H1 (cell line): ENCODE measurements at regions of chr2 and their contacts with region 1.

Region 1: GRCh38 chr2:176814306-176815052 is 398.1 kb upstream of the HNRNPA3 start:
- DNase-seq: no peak
- H3K4me3 ChIP-seq: no peak overlapping the region
- H3K27ac ChIP-seq: no peak overlapping the region
- H3K4me1 ChIP-seq: peaks cover 5 to 20% (median 15%) of the 10 kb centered on the region in 4 experiments; a peak in 5 of 7 replicates
- H3K27me3 ChIP-seq: no peaks in the 10 kb centered on the region; a peak in 1 of 7 replicates
- CTCF ChIP-seq: peak in 2 of 3 experiments; percentile 29 to 47; a peak in 2 of 4 replicates
- EP300 ChIP-seq: no peak
- POLR2A ChIP-seq: no peak
- RAD21 ChIP-seq: peak; percentile 76 to 79

Region 2: DNA sequence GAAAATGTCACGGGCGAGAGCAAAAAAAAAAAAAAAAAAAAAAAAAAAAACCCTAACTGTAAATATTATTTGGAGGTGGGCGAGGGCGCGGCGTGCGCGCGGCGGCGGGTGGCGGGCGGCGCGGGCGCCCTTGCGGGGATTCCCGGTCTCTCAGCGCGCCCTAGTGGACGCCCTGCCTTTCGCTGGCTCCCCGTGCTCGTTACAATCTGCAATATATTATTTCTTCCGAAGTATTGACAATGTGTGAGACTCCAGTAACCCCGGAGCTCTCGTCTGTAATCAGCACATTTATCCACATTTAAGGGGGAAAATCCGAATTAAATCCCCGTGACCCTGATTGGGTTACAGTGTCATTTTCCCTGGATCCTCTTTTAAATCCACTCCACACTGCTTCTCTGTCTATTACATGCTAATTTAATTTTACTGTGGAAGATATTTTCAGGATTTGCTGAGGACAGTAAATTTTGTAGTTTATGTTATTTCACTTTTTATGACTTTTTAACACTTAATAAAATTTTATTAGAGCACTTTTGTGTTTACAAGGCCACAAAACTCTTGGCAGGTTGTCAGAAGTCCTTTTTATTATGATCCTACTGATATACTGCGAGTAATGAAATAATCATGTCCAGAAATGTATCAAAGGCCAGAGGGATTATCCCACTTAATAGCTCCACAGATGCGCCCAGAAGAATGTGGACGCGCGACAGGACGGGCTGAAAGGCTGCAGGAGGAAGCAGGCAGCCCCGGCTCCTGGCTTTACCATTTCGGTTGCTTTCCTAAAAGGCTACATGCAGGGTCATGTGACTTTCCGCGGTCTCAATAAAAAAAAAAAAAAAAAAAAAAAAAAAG is 176.1 kb before region 1 on chr2:
- CTCF ChIA-PET with region 1: interaction called, 11 read pairs
- POLR2A ChIA-PET with region 1: no interaction called
- DNase-seq: peak in 1 of 2 experiments; percentile 79
- H3K4me3 ChIP-seq: peak overlapping the region; percentile 34 to 68 (median 45)
- H3K27ac ChIP-seq: no peak overlapping the region
- H3K4me1 ChIP-seq: peaks cover 0 to 5% (median 0%) of the 10 kb centered on the region in 4 experiments; a peak in 2 of 7 replicates
- H3K27me3 ChIP-seq: peaks cover 12 to 35% (median 20%) of the 10 kb centered on the region in 4 experiments
- CTCF ChIP-seq: peak; percentile 56 to 79 (median 78)
- EP300 ChIP-seq: no peak
- POLR2A ChIP-seq: no peak
- RAD21 ChIP-seq: peak; percentile 81 to 88

Region 3: DNA sequence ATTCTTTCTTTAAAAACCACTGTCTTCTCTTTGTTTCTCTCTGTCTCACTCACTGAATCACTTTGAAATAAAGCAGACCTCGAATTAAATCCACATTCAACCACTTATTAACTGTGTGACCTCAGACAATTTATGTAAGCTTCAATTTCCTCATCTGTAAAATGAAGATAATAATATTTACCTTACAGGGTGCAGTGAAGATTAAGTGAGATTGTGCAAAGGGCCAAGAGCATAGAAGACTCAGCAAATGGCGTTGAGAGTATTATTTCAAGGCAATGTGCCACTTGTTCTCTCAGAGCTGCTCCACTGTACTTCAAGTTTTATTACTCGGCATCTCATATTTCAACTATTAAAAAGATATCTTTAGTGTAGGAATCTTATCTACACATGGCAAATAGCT is 56.1 kb before region 1 on chr2:
- CTCF ChIA-PET with region 1: interaction called, 14 read pairs
- POLR2A ChIA-PET with region 1: no interaction called
- DNase-seq: no peak
- H3K4me3 ChIP-seq: no peak overlapping the region
- H3K27ac ChIP-seq: no peak overlapping the region
- H3K4me1 ChIP-seq: peaks cover 0 to 12% (median 3%) of the 10 kb centered on the region in 4 experiments; a peak in 4 of 7 replicates
- H3K27me3 ChIP-seq: no peaks in the 10 kb centered on the region
- CTCF ChIP-seq: no peak
- EP300 ChIP-seq: no peak
- POLR2A ChIP-seq: no peak
- RAD21 ChIP-seq: no peak

Region 4: GRCh38 chr2:176804392-176804791 is 10.1 kb before region 1 on chr2:
- CTCF ChIA-PET with region 1: interaction called, 19 read pairs
- POLR2A ChIA-PET with region 1: no interaction called
- DNase-seq: no peak
- H3K4me3 ChIP-seq: no peak overlapping the region
- H3K27ac ChIP-seq: no peak overlapping the region
- H3K4me1 ChIP-seq: no peaks in the 10 kb centered on the region
- H3K27me3 ChIP-seq: no peaks in the 10 kb centered on the region
- CTCF ChIP-seq: no peak
- EP300 ChIP-seq: no peak
- POLR2A ChIP-seq: no peak
- RAD21 ChIP-seq: no peak

Region 5: GRCh38 chr2:176830362-176830761 is 15.9 kb after region 1 on chr2:
- CTCF ChIA-PET with region 1: interaction called, 29 read pairs
- POLR2A ChIA-PET with region 1: no interaction called
- DNase-seq: no peak
- H3K4me3 ChIP-seq: no peak overlapping the region
- H3K27ac ChIP-seq: no peak overlapping the region
- H3K4me1 ChIP-seq: no peaks in the 10 kb centered on the region
- H3K27me3 ChIP-seq: no peaks in the 10 kb centered on the region
- CTCF ChIP-seq: peak; percentile 38 to 53 (median 40)
- EP300 ChIP-seq: no peak
- POLR2A ChIP-seq: no peak
- RAD21 ChIP-seq: peak; percentile 34 to 54

Region 6: DNA sequence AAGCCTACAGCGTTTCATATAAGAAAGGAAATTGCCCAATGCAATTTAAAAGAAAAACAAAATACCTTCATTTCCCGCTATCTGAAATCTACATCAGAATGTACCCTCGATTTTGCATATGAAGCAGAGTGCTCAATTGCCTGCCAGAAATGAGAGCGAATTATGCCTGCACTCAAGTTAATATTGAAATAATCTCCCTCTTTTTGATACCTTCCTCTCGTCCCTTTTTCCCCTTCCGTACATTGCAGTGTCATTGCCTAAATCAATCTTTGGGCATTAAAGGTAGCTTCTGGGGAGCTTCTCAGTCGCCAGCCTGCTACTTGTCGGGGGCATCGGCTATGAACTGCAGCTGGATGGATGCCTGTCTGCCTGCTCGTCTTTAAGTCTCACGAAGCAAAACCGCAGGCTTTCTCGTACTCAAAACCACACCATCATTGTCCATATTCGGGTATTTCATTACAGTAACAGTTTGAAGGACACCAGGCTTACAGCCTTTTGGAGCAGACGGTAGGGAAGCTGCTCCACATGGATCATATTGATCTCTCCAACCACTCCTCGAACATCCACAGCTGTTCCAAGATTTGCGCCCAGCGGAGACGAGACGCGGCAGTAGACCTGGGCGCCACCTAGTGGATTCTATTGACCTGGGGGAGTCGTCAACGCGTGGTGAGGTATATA is 334.1 kb after region 1 on chr2:
- CTCF ChIA-PET with region 1: interaction called, 18 read pairs
- POLR2A ChIA-PET with region 1: no interaction called
- DNase-seq: peak; percentile 59 to 93
- H3K4me3 ChIP-seq: peak overlapping the region; percentile 14 to 60 (median 59); a peak in 7 of 8 replicates
- H3K27ac ChIP-seq: no peak overlapping the region
- H3K4me1 ChIP-seq: no peaks in the 10 kb centered on the region; a peak in 2 of 7 replicates
- H3K27me3 ChIP-seq: peaks cover 0 to 7% (median 1%) of the 10 kb centered on the region in 4 experiments; a peak in 3 of 7 replicates
- CTCF ChIP-seq: peak; percentile 89 to 90 (median 90)
- EP300 ChIP-seq: no peak
- POLR2A ChIP-seq: no peak
- RAD21 ChIP-seq: peak; percentile 73 to 82

Region 7: DNA sequence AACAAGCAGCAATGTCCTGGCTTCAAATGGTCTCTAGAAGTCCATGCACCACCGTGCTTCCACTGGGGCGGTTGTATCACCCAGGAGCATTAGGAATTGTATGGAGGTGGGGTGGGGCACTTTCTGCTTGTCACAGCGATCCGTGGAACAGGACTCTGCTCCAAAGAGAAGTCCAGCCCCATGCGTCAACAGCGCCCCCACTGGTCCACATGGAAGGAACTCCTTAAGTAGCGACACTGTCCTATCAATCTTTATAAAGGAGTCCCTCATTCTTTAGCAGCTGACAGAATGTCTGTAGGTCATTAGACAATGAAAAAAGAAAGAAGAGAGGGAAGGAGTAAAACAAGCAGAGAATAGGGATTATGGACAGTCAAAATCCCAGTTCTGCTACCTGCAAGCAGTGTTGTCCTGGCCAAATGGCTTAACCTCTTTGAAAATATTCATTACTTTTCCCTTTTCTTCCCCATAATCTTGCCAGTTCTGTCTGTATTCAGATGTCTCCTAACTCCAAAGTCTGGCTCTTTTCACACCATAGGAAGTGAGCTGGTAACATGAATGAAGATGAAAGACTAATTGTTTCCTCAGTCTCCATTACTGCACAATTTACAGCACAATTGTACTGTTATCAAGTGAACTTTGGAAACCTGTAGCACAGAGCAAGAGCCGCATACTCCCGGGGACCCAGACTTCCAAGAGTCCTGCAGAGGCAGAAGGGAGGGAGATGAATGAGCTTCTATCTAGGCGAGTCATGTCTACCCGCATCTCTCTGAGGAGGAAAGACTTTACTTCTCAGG is 440.2 kb after region 1 on chr2:
- CTCF ChIA-PET with region 1: no interaction called
- POLR2A ChIA-PET with region 1: no interaction called
- DNase-seq: peak; percentile 39 to 86
- H3K4me3 ChIP-seq: no peak overlapping the region
- H3K27ac ChIP-seq: no peak overlapping the region
- H3K4me1 ChIP-seq: peaks cover 0 to 7% (median 0%) of the 10 kb centered on the region in 4 experiments; a peak in 1 of 7 replicates
- H3K27me3 ChIP-seq: no peaks in the 10 kb centered on the region
- CTCF ChIP-seq: peak; percentile 66 to 92 (median 89)
- EP300 ChIP-seq: no peak
- POLR2A ChIP-seq: no peak
- RAD21 ChIP-seq: peak; percentile 52 to 73